Calu3 (cell line): ENCODE measurements at regions of chr6 and their contacts with region 1.

Region 1: GRCh38 chr6:25579902-25580495 is 72.0 kb upstream of the SCGN start:
- DNase-seq: no peak
- H3K4me3 Mint-ChIP-seq: no peak overlapping the region
- H3K27ac Mint-ChIP-seq: no peak overlapping the region
- H3K4me1 Mint-ChIP-seq: no peaks in the 10 kb centered on the region
- H3K27me3 Mint-ChIP-seq: no peaks in the 10 kb centered on the region
- CTCF ChIP-seq: no peak

Region 2: DNA sequence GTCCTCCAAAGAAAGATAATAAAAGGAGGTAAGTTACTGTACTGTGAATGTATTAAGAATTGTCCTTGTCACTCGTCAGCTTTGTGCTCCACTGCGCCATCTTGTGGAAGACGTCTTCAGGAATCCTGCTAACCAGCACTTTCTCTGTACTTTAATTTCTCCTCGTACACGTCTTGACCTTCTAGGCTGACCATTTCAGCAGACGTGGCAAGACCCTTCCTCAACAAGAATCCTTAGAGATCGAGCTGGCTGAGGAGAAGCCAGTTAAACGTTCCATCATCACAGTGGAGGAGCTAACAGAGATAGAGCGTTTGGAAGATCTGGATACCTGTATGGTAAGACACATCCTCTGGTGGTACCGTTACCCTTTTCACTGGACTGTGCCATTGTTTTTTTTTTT is 23.5 kb before region 1 on chr6:
- CTCF ChIA-PET with region 1: no interaction called
- intact Hi-C with region 1: loop called (anchors 1 kb)
- DNase-seq: peak; percentile 88
- H3K4me3 Mint-ChIP-seq: no peak overlapping the region
- H3K27ac Mint-ChIP-seq: peak overlapping the region; percentile 2
- H3K4me1 Mint-ChIP-seq: peaks cover 16% of the 10 kb centered on the region
- H3K27me3 Mint-ChIP-seq: no peaks in the 10 kb centered on the region
- CTCF ChIP-seq: peak; percentile 94

Region 3: GRCh38 chr6:25590986-25591385 is 11.0 kb after region 1 on chr6:
- CTCF ChIA-PET with region 1: no interaction called
- intact Hi-C with region 1: no loop called
- DNase-seq: no peak
- H3K4me3 Mint-ChIP-seq: no peak overlapping the region
- H3K27ac Mint-ChIP-seq: no peak overlapping the region
- H3K4me1 Mint-ChIP-seq: no peaks in the 10 kb centered on the region
- H3K27me3 Mint-ChIP-seq: no peaks in the 10 kb centered on the region
- CTCF ChIP-seq: no peak